Caco-2 (cell line): ENCODE measurements at regions of chr5 and their contacts with region 1.

Region 1: GRCh38 chr5:106862450-106863193 is 808.1 kb downstream of the EFNA5 start:
- DNase-seq: no peak
- H3K4me3 ChIP-seq: no peak overlapping the region
- H3K4me3 Mint-ChIP-seq: no peak overlapping the region
- H3K27ac Mint-ChIP-seq: no peak overlapping the region
- H3K4me1 ChIP-seq: peaks cover 42% of the 10 kb centered on the region
- H3K4me1 Mint-ChIP-seq: peaks cover 20% of the 10 kb centered on the region
- H3K27me3 ChIP-seq: no peaks in the 10 kb centered on the region
- H3K27me3 Mint-ChIP-seq: no peaks in the 10 kb centered on the region
- CTCF ChIP-seq: no peak

Region 2: DNA sequence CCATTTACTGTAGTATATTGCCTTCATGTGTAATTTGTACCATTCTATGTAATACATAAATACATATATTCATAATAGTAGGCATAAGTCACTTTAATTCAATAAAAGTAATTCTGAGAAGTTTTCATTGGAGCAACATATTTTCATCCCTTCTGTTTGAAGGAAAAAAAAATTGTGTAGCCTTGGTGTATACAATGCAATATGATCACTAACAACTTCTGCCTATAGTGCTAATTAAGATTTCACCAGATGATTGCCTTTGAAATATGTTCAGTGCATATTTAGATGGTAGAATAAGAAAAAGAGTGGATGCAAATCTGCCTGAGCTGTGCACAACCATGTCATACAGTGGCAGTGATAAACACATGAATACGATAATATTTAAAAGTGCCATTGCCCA is 188.7 kb before region 1 on chr5:
- CTCF ChIA-PET with region 1: no interaction called
- POLR2A ChIA-PET with region 1: no interaction called
- intact Hi-C with region 1: no loop called
- DNase-seq: no peak
- H3K4me3 ChIP-seq: no peak overlapping the region
- H3K4me3 Mint-ChIP-seq: no peak overlapping the region
- H3K27ac Mint-ChIP-seq: no peak overlapping the region
- H3K4me1 ChIP-seq: no peaks in the 10 kb centered on the region
- H3K4me1 Mint-ChIP-seq: no peaks in the 10 kb centered on the region
- H3K27me3 ChIP-seq: no peaks in the 10 kb centered on the region
- H3K27me3 Mint-ChIP-seq: no peaks in the 10 kb centered on the region
- CTCF ChIP-seq: no peak

Region 3: DNA sequence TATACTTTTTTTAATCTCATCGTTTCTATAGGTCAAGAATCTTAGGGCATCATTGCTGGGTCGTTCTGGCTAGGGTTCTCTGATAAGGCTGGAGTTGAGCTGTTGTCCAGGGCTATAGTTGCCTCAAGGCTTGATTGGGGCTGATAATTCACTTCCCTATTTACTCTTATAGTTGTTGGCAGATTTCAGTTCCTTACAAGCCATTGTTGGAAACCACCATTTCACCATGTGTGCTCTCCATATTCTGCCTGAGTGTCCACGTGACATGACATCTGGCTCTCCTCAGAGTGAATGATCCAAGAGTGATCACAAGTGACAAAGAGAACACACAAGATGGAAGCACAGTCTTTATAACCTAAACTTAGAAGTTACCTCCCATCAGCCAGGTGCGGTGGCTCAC is 44.1 kb before region 1 on chr5:
- CTCF ChIA-PET with region 1: no interaction called
- POLR2A ChIA-PET with region 1: no interaction called
- intact Hi-C with region 1: no loop called
- DNase-seq: no peak
- H3K4me3 ChIP-seq: no peak overlapping the region
- H3K4me3 Mint-ChIP-seq: no peak overlapping the region
- H3K27ac Mint-ChIP-seq: no peak overlapping the region
- H3K4me1 ChIP-seq: peaks cover 19% of the 10 kb centered on the region; the same call in 1 of the 2 replicates
- H3K4me1 Mint-ChIP-seq: no peaks in the 10 kb centered on the region
- H3K27me3 ChIP-seq: no peaks in the 10 kb centered on the region
- H3K27me3 Mint-ChIP-seq: no peaks in the 10 kb centered on the region
- CTCF ChIP-seq: no peak

Region 4: GRCh38 chr5:106849266-106849665 is 13.4 kb before region 1 on chr5:
- CTCF ChIA-PET with region 1: no interaction called
- POLR2A ChIA-PET with region 1: no interaction called
- intact Hi-C with region 1: loop called (anchors 2 kb)
- DNase-seq: no peak
- H3K4me3 ChIP-seq: no peak overlapping the region
- H3K4me3 Mint-ChIP-seq: peak overlapping the region; percentile 33
- H3K27ac Mint-ChIP-seq: no peak overlapping the region
- H3K4me1 ChIP-seq: peaks cover 30% of the 10 kb centered on the region
- H3K4me1 Mint-ChIP-seq: no peaks in the 10 kb centered on the region
- H3K27me3 ChIP-seq: no peaks in the 10 kb centered on the region
- H3K27me3 Mint-ChIP-seq: no peaks in the 10 kb centered on the region
- CTCF ChIP-seq: no peak